Heart left ventricle (tissue), 16 donors: ENCODE measurements at regions of chr9 and their contacts with region 1.

Region 1: GRCh38 chr9:74639112-74639511 is 142.0 kb downstream of the RORB start:
- DNase-seq: no peak
- ATAC-seq: no peak
- H3K4me3 ChIP-seq: no peak overlapping the region
- H3K27ac ChIP-seq: no peak overlapping the region
- H3K4me1 ChIP-seq: no peaks in the 10 kb centered on the region
- H3K27me3 ChIP-seq: no peaks in the 10 kb centered on the region
- CTCF ChIP-seq: no peak
- POLR2A ChIP-seq: no peak

Region 2: GRCh38 chr9:73269430-73270101 is 1369.5 kb before region 1 on chr9:
- intact Hi-C with region 1: no loop called
- DNase-seq: no peak
- ATAC-seq: no peak
- H3K4me3 ChIP-seq: peak overlapping the region in 1 of 12 donors; percentile 17
- H3K27ac ChIP-seq: no peak overlapping the region
- H3K4me1 ChIP-seq: no peaks in the 10 kb centered on the region
- H3K27me3 ChIP-seq: no peaks in the 10 kb centered on the region
- CTCF ChIP-seq: peak in 10 of 12 donors; percentile 11 to 45 (median 38)
- POLR2A ChIP-seq: no peak

Region 3: GRCh38 chr9:74653410-74654080 is 14.4 kb after region 1 on chr9:
- intact Hi-C with region 1: loop called in 1 of 10 experiments (anchors 2 kb)
- DNase-seq: no peak
- ATAC-seq: peak in 1 of 4 donors; percentile 58
- H3K4me3 ChIP-seq: no peak overlapping the region
- H3K27ac ChIP-seq: no peak overlapping the region
- H3K4me1 ChIP-seq: no peaks in the 10 kb centered on the region
- H3K27me3 ChIP-seq: no peaks in the 10 kb centered on the region
- CTCF ChIP-seq: no peak
- POLR2A ChIP-seq: no peak

Region 4: GRCh38 chr9:74742792-74743730 is 103.9 kb after region 1 on chr9:
- intact Hi-C with region 1: no loop called
- DNase-seq: no peak
- ATAC-seq: peak in 1 of 4 donors; percentile 36
- H3K4me3 ChIP-seq: no peak overlapping the region
- H3K27ac ChIP-seq: no peak overlapping the region
- H3K4me1 ChIP-seq: peaks cover 0 to 5% (median 0%) of the 10 kb centered on the region in 12 donors
- H3K27me3 ChIP-seq: peaks cover 0 to 14% (median 0%) of the 10 kb centered on the region in 9 donors
- CTCF ChIP-seq: peak; percentile 39 to 79 (median 56)
- POLR2A ChIP-seq: no peak

Region 5: GRCh38 chr9:74824654-74825053 is 185.5 kb after region 1 on chr9:
- intact Hi-C with region 1: no loop called
- DNase-seq: peak in 4 of 5 donors; percentile 39 to 65 (median 48)
- ATAC-seq: peak in 3 of 4 donors; percentile 50 to 80 (median 73)
- H3K4me3 ChIP-seq: no peak overlapping the region
- H3K27ac ChIP-seq: no peak overlapping the region
- H3K4me1 ChIP-seq: peaks cover 0 to 6% (median 0%) of the 10 kb centered on the region in 12 donors
- H3K27me3 ChIP-seq: no peaks in the 10 kb centered on the region
- CTCF ChIP-seq: no peak
- POLR2A ChIP-seq: no peak